H1 (cell line): ENCODE measurements at regions of chr1 and their contacts with region 1.

Region 1: DNA sequence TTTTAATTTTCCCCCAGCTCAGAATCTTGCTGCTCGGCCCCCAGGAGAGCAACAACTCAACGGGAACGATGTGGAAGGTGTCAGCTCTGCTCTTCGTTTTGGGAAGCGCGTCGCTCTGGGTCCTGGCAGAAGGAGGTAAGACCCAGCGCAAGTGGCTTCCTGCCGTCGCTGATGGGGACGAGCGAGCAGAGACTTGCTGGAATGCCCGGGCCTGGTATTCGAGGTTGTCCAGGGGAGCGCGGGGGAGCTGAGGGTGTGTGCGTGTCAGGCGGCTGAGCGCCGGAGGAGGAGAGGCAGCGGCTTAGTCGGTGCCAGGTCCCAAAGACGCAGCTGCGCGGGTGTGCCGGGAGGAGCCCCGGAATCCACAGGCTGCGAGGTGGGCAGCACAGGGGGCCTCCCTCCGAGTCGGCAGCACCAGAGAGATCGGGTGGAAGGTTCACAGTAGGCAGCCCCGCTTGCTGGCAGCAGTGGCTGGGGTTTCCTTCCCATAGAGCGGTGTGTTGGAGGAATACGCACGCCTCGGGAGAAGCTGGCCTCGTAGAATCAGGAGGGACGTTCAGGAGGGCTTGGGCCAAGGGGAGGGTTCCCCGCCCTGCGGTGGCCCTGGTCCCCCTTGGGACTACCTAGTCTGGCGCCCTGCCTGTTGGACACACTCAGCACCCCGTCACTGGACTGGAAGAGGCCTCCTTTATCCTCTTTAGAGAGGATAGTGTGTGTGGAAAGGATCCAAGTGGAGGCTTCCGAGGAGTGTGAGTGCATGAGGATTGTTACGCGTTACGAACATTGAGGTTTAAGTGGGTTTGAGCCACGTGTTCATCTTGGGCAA is 547 bp downstream of the PDPN start:
- DNase-seq: peak in 1 of 2 experiments; percentile 56
- H3K4me3 ChIP-seq: peak overlapping the region; percentile 80 to 100 (median 88)
- H3K27ac ChIP-seq: peak overlapping the region; percentile 52
- H3K4me1 ChIP-seq: peaks cover 9 to 41% (median 29%) of the 10 kb centered on the region in 4 experiments
- H3K27me3 ChIP-seq: peaks cover 0 to 3% (median 0%) of the 10 kb centered on the region in 4 experiments; a peak in 3 of 7 replicates
- CTCF ChIP-seq: no peak
- EP300 ChIP-seq: no peak
- POLR2A ChIP-seq: no peak
- RAD21 ChIP-seq: no peak

Region 2: GRCh38 chr1:13543451-13544220 is 40.5 kb before region 1 on chr1:
- CTCF ChIA-PET with region 1: interaction called, 10 read pairs
- POLR2A ChIA-PET with region 1: no interaction called
- DNase-seq: no peak
- H3K4me3 ChIP-seq: no peak overlapping the region
- H3K27ac ChIP-seq: no peak overlapping the region
- H3K4me1 ChIP-seq: no peaks in the 10 kb centered on the region
- H3K27me3 ChIP-seq: no peaks in the 10 kb centered on the region
- CTCF ChIP-seq: peak; percentile 9 to 25 (median 13); a peak in 3 of 4 replicates
- EP300 ChIP-seq: no peak
- POLR2A ChIP-seq: no peak
- RAD21 ChIP-seq: peak in 1 of 2 experiments; percentile 35; a peak in 2 of 4 replicates